GM10248 (cell line): ENCODE measurements at regions of chr17 and their contacts with region 1.

Region 1: GRCh38 chr17:996554-997344 is at the start of gene TIMM22:
- DNase-seq: peak; percentile 96
- CTCF ChIP-seq: peak; percentile 92

Region 2: GRCh38 chr17:781805-782731 is 214.7 kb before region 1 on chr17 and contains the starts of genes GLOD4 and MRM3:
- CTCF ChIA-PET with region 1: interaction called, 15 read pairs
- POLR2A ChIA-PET with region 1: no interaction called
- DNase-seq: peak; percentile 98
- CTCF ChIP-seq: no peak

Region 3: DNA sequence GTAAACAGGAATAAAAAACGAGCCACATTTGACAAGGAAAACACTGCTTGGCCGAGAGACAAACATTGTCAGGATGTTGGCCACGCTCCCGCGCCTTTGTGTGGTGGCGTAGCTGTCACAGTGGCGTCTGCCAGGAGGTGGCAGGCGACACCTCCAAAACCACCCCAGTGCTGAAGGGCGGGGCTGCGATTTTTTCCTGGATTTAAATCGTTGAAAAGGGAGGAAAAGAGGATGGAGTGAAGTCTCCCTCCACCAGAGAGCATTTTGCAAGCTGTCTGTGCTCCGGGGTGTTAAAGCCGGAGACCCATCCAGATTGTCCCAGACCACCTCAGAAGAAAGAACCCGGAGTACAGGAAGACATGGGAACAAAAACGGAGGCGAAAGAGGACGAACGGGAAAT is 201.9 kb before region 1 on chr17:
- CTCF ChIA-PET with region 1: interaction called, 12 read pairs
- POLR2A ChIA-PET with region 1: no interaction called
- DNase-seq: peak; percentile 72
- CTCF ChIP-seq: peak; percentile 58

Region 4: DNA sequence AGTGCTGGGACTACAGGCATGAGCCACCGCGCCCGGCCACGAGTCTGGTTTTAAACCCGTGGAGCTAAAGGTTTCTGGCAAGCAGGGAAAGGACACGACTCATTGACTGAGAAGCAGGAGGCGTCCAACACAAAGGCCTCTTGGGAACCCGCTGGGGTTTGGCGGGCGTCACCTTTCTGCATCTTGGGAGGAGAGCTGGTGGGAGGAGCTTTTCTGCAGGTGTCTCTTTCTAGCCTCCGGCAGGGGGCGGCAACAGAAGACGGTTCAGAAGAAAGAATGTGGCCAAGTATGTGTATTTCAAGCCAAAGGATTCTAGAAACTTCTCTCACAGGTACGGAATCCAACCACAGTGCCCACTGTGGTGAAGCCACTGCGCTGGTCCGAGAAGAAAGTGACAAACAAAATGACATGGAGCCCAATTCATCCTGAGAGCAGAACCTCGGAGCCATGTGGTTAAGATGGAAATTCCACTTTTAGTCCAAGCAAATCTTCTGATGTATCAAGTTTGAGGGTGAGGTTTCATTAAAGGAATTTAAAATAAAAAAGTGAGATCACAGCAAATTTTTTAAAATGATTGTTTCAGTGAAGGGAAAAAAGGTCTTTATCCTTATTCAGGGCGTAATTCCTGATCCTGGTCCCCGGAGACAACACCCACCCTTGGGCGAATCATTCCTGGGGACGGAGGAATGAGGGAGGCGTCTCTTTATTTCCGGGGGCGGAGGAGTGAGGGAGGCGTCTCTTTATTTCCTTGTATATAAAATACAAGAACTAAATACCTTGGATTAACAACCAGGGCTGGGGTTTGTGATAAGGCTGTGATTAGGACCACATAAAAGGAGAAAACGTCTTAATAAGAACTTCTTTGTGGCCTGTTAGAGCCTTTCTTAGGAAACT is 117.0 kb before region 1 on chr17:
- CTCF ChIA-PET with region 1: interaction called, 14 read pairs
- POLR2A ChIA-PET with region 1: no interaction called
- DNase-seq: peak; percentile 77
- CTCF ChIP-seq: peak; percentile 56

Region 5: DNA sequence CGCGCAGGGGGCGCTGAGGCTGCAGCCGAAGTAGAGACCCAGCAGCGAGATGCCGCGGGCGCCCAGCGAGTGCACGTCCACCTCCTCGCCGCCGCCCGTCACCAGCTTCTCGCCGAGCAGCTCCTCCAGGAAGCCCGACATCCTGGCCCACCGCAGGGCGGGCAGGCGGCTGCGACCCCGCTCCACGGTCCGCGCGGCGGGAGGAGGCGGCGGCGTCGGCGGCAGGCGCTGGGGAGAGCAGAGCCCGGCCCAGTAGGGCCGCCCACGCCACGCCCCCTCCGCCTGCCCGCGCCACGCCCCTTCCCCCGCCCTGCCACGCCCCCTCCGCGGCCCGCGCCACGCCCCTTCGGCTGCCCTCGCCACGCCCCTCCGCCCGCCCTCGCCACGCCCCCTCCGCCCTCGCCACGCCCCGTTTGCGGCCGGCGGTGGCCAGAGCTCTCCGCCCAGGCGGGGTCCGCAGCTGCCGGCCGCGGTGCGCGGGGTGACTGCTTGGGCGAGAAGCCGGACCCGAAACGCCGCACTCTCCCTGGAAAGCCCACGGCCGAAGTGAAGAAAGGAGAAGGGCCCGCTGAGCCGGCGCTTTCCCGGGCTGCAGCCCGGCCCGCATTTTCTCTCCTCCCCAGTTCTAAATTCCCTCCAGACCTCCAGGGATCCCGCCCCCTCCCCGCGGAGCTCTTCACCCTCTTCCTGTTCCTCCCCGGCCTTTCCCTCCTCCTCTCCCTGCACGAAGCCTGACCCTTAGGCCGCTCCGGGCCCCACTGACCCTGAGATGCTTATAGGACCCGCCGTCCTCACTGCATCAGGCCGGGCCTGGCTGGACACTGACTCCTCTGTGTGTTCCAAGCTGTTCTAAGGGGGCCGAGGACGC is 17.0 kb before region 1 on chr17 and contains the start of gene NXN:
- CTCF ChIA-PET with region 1: interaction called, 31 read pairs
- POLR2A ChIA-PET with region 1: no interaction called
- DNase-seq: peak; percentile 98
- CTCF ChIP-seq: no peak